ENCODE measurements at regions of chr10 and their contacts with region 1.

Region 1: DNA sequence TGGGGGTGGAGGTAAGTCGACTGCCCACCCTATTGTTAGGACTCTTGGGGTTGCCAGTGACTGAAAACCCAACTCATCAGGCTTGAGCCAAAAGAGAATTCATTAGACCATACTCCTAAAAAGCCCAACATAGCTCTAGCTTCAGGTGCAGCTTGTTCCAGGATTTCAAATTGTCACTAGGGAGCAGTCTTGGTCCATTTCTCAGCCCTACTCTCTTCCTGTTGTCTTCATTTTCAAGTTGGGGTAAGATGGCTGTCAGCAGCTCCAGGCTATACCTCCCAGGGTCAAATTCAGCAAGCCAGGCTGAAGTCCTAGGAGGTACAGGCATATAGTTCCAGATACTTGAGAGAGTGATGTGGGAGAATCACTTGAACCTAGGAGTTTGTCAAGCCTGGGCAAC is 14.9 kb upstream of the COL13A1 start:
- DNase-seq: peak in 1 of 2 donors; percentile 65
- H3K4me3 ChIP-seq: no peak overlapping the region
- H3K27ac ChIP-seq: peak overlapping the region; percentile 11 to 42
- H3K4me1 ChIP-seq: peaks cover 5 to 20% of the 10 kb centered on the region in 2 donors
- H3K27me3 ChIP-seq: no peaks in the 10 kb centered on the region
- CTCF ChIP-seq: peak in 2 of 3 experiments; percentile 14 to 43

Region 2: GRCh38 chr10:69253171-69253570 is 533.6 kb before region 1 on chr10:
- intact Hi-C with region 1: no loop called
- DNase-seq: no peak
- H3K4me3 ChIP-seq: no peak overlapping the region
- H3K27ac ChIP-seq: no peak overlapping the region
- H3K4me1 ChIP-seq: no peaks in the 10 kb centered on the region
- H3K27me3 ChIP-seq: no peaks in the 10 kb centered on the region
- CTCF ChIP-seq: no peak

Region 3: GRCh38 chr10:69957886-69958555 is 171.2 kb after region 1 on chr10:
- intact Hi-C with region 1: loop called (anchors 2 kb)
- DNase-seq: peak in 1 of 2 donors; percentile 62
- H3K4me3 ChIP-seq: no peak overlapping the region
- H3K27ac ChIP-seq: no peak overlapping the region
- H3K4me1 ChIP-seq: no peaks in the 10 kb centered on the region
- H3K27me3 ChIP-seq: no peaks in the 10 kb centered on the region
- CTCF ChIP-seq: peak; percentile 54 to 80 (median 72)

Measured in ascending aorta (tissue), 2 donors.